ENCODE measurements at regions of chr1 and their contacts with region 1.

Region 1: DNA sequence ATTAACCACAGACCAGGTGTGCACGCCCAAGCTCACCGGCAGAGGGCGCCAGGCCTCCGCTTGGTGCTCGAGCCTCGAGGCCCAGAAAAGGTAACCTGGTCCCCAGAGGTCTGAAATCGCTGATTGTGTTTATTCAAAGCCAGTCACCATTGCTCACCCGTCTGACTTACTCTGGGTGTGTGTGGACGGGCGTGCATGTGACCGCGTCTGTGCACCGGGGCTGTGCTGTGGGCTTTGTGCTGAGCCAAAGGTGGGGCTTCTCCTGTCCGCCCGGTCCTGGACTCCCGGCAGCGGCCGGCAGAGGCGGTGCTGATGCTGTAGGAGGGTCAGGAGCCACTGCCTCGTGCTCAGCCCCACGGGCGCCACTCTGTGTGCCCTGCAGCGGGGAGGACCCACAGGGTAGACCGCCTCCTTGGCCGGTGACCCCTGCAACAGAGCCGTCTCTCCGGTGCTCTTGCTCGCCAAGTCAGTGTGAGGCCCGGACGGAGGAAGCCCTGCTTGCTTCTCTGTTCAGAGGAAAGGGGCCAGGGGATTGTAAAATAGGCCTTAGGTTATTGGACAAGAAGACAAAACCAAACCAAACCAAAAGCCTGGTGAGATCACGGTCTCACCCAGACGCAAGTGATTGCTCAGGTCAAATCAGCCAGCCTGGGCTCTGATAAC is 32.0 kb upstream of the BTG2 start:
- DNase-seq: peak; percentile 96
- H3K4me3 Mint-ChIP-seq: peak overlapping the region; percentile 28
- H3K27ac Mint-ChIP-seq: no peak overlapping the region
- H3K4me1 Mint-ChIP-seq: peaks cover 3% of the 10 kb centered on the region
- H3K27me3 Mint-ChIP-seq: no peaks in the 10 kb centered on the region
- CTCF ChIP-seq: peak; percentile 100

Region 2: DNA sequence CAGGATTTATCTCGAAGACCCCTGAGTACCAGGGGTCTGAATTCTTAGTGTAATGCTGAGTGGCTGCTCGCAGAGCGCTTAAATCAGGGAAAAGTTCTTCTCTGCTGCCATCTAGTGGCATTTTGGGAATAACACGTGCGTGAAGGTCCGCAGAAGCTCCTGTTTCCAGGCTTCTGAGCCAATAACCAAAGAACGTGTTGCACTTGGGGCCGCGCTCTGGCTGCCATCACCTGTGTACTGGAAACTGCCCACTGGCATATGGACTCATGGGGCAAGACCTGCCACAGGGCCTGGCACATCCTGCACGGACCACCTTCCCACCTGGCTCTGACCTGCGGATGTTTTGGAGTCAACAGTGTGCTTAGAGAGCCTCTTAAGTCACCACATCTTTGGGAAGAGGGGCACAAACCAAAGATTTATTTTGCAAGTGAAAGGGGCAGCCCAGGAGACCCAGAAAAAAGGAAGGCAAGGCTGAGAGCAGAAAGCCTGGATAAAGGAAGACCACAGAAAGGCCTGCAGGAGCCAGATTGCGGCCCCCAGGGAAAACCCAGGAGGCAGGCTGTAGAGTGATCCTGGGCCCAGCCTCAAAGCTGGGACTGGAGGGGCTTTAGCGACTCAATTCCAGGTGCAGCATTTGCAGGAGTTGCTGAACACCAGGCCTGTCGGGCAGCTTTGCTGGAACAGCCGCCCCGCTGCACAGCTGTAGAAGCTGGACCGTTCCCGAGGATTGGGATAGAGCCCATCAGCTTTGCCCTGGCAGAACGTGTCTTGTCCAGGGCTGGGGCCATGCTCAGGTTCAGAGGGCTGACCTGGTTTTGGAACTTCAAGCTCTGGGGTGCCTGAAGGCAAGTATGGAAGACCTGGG is 56.8 kb before region 1 on chr1:
- CTCF ChIA-PET with region 1: interaction called, 159 read pairs
- POLR2A ChIA-PET with region 1: no interaction called
- intact Hi-C with region 1: loop called (anchors 1 kb)
- DNase-seq: peak; percentile 89
- H3K4me3 Mint-ChIP-seq: no peak overlapping the region
- H3K27ac Mint-ChIP-seq: no peak overlapping the region
- H3K4me1 Mint-ChIP-seq: no peaks in the 10 kb centered on the region
- H3K27me3 Mint-ChIP-seq: peaks cover 33% of the 10 kb centered on the region
- CTCF ChIP-seq: peak; percentile 93

Region 3: DNA sequence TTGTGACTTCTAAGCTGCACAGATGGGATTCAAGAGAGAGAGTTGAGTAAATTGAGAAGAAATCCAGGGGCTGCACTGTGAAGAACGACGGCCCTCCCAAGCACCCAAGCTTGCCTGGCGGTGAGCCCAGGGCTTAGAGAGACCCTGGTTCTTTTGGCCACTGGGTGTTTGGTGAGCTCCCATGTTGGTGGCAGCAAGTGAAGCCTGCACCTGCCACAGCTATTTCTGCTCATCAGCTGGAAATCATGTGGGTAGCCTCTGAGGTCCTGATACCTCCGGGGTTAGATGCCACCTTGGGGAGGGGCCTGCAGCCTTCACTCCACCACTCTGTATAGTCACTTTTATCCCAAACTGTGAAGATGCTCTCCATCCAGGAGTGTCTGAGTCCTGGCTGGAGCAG is 25.8 kb after region 1 on chr1:
- CTCF ChIA-PET with region 1: interaction called, 33 read pairs
- POLR2A ChIA-PET with region 1: no interaction called
- intact Hi-C with region 1: no loop called
- DNase-seq: no peak
- H3K4me3 Mint-ChIP-seq: no peak overlapping the region
- H3K27ac Mint-ChIP-seq: no peak overlapping the region
- H3K4me1 Mint-ChIP-seq: peaks cover 11% of the 10 kb centered on the region
- H3K27me3 Mint-ChIP-seq: peaks cover 10% of the 10 kb centered on the region
- CTCF ChIP-seq: no peak

Region 4: DNA sequence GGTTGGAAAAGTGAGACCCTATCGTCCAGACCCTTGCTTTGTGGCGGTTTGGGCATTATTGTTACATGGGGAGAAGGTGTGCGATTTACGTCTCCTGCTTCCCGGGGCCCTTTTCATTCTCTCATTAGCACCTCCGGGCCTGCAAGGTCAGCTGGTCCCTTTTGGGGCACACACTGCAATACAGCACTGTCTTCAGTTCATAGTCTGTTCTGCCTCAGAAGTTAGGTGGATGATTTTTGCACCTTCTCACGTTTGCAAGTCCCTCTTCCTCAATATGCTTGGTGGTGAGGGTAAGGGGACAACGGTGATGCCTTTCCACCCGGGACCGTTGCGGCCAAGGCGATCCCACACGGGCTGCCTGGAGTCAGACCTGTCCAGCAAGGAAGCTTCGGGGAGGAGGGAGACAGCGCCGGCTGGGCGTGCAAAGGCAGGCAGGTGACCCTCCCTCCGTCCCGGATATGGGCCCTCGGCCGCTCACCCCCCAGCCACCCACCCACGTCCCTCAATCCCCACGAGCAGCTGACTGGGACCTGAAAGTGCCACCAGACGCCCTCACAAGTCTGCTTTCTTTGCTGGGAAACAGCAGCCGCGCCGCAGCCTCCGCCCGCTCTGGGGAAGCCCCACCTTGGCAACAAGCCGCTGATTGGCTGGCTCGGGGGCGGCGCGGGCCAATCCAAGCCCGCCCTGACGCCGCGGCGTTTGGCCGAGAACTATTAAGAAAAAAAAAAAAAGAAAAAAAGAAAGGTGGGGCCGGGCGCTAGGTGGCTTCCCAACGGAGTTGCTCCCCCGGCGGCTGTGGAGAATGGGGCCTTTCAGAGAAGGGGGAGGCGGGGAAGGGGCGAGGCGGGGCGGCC is 53.7 kb after region 1 on chr1:
- CTCF ChIA-PET with region 1: interaction called, 980 read pairs
- POLR2A ChIA-PET with region 1: interaction called, 12 read pairs
- intact Hi-C with region 1: loop called (anchors 1 kb)
- DNase-seq: peak; percentile 97
- H3K4me3 Mint-ChIP-seq: peak overlapping the region; percentile 71
- H3K27ac Mint-ChIP-seq: peak overlapping the region; percentile 57
- H3K4me1 Mint-ChIP-seq: peaks cover 32% of the 10 kb centered on the region
- H3K27me3 Mint-ChIP-seq: peaks cover 16% of the 10 kb centered on the region
- CTCF ChIP-seq: no peak

Region 5: GRCh38 chr1:203440771-203441170 is 167.4 kb after region 1 on chr1:
- CTCF ChIA-PET with region 1: interaction called, 6 read pairs
- POLR2A ChIA-PET with region 1: no interaction called
- intact Hi-C with region 1: loop called (anchors 5 kb)
- DNase-seq: peak; percentile 61
- H3K4me3 Mint-ChIP-seq: no peak overlapping the region
- H3K27ac Mint-ChIP-seq: no peak overlapping the region
- H3K4me1 Mint-ChIP-seq: no peaks in the 10 kb centered on the region
- H3K27me3 Mint-ChIP-seq: peaks cover 66% of the 10 kb centered on the region
- CTCF ChIP-seq: peak; percentile 48

Region 6: DNA sequence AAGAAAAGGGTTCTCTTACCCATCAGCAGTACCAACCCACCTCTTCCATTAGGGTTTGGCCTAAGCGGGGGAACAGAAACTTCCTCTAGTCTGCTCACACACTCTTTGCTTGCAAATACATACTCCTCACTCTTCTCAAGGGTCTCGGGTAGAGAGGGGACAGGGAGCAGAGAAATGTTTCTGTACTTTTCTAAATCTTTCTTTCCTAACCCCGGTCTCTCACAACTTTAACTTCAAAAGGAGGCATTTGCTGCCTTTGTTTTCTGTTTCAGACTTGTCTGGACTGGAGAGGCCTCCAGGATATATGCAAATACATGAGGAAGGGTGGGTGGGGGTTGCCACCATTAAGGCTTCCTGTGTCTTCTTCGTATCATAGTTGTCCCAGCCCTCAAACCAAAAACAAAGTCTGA is 481.1 kb after region 1 on chr1:
- CTCF ChIA-PET with region 1: no interaction called
- POLR2A ChIA-PET with region 1: no interaction called
- intact Hi-C with region 1: no loop called
- DNase-seq: no peak
- H3K4me3 Mint-ChIP-seq: no peak overlapping the region
- H3K27ac Mint-ChIP-seq: peak overlapping the region; percentile 4
- H3K4me1 Mint-ChIP-seq: peaks cover 26% of the 10 kb centered on the region
- H3K27me3 Mint-ChIP-seq: no peaks in the 10 kb centered on the region
- CTCF ChIP-seq: no peak